HEK293T (cell line): ENCODE measurements at regions of chr1 and their contacts with region 1.

Region 1: GRCh38 chr1:200654660-200655059 is 15.0 kb downstream of the DDX59 start:
- DNase-seq: no peak

Region 2: GRCh38 chr1:199843861-199844260 is 810.8 kb before region 1 on chr1:
- CTCF ChIA-PET with region 1: interaction called, 10 read pairs
- POLR2A ChIA-PET with region 1: no interaction called
- DNase-seq: no peak